ENCODE measurements at regions of chr17 and their contacts with region 1.

Region 1: DNA sequence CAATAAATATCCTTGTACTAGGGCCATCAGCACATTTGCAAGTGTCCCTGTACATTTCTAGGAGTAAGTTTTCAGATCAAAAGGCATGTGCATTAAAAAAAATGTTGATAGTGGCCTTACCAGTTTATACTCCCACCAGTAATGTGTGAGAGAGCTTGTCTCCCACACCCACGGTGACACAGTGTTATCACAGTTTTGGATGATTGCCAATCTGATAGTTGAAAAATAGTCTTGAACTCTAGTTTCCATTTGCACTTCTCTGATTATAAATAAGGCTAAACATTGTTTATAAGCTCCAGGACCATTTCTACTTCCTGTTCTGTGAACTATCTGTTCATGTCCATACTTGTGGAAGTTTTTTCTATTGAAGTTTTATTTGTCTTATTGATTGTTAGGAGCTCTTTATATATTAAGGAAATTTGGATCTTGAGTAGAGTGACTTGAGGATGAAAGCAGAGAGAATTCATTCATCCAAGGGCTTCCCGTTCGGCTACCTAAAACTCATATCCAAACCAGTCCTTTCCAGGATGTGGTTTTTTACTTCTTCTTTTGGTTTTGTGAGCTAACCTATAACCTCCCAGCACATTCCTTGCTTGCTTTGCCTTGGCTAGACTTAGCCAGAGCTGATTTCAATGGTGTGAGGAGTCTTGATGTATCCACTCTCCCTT is 25.9 kb upstream of the MPRIP start:
- DNase-seq: no peak
- ATAC-seq: no peak
- H3K4me3 ChIP-seq: no peak overlapping the region
- H3K27ac ChIP-seq: peak overlapping the region in 2 of 4 donors; percentile 80 to 86
- H3K4me1 ChIP-seq: peaks cover 26 to 34% (median 29%) of the 10 kb centered on the region in 3 donors
- H3K27me3 ChIP-seq: no peaks in the 10 kb centered on the region
- CTCF ChIP-seq: no peak

Region 2: DNA sequence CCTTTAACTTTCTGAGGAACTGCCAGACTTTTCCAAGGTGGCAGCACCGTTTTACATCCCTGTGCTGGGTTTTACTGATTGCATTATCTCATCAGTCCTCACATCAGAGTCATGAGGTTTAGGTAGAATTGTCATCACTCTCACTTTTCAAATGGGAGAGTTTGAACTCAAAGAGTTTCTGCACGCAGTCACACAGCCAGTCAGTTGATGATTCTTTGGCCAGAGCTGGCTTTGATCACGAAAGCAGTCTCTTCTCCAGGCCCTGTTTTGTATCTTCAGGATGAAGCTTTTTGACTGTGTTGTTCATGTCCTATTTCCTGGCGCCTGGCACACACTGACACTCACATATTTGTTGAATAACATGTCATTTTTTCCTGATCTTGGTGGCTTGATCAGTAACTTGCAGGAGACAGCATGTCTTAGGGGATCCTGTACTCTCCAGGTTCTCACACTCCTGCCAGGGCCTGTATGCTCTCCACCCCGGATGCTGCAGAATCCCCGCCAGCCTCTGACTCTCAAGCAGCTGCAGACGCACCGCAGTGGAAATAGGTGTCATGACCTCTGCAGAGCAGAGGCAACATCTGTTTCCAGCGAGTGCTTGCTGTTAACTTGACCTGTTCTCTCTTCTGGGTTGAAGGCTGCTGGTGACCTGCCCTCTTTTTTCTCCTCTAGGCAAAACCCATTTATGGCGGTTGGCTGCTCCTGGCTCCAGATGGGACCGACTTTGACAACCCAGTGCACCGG is 58.9 kb after region 1 on chr17:
- intact Hi-C with region 1: loop called in 1 of 3 experiments (anchors 10 kb)
- DNase-seq: peak in 3 of 6 donors; percentile 7 to 45 (median 21)
- ATAC-seq: no peak
- H3K4me3 ChIP-seq: no peak overlapping the region
- H3K27ac ChIP-seq: no peak overlapping the region
- H3K4me1 ChIP-seq: peaks cover 16 to 31% (median 26%) of the 10 kb centered on the region in 3 donors
- H3K27me3 ChIP-seq: no peaks in the 10 kb centered on the region
- CTCF ChIP-seq: no peak